BJ (cell line): ENCODE measurements at regions of chr1 and their contacts with region 1.

Region 1: DNA sequence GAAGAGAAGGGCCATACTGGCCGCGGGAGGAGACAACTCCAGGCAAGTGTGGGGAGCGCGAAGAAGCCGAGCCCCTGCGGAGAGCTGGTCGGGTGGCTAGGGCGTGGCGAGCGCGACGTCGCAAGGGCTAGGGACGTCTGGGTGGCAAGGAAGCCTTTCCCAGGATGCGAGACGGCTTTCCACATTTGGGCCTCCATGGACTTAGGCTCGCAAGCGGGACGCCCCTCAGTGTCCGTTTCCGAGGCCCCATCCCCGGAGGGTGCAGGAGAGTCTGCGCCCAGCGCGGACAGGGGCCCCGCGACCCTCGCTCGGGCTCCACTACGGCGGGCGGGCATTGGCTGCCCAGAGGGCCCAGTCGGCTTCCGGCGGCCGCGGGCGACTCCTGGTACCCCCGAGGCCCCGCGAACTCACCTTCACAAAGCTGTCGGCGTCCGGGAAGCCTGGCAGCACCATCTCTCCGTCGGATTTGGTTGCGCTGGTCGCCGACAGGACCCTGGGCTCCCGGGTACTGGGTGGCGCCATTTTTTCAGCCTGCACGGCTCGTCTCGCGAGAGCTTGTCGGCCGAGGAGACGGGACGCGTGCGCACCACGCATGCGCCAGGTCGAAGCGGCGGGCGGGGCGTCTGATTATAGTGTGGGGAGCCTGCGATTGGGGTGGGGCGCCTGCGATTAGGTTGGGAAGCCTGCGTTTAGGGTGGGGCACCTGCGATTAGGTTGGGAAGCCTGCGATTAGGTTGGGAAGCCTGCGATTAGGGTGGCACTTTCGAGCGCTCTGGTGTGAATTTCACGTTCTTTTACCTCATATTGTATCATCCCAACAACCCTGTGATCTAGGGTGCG is at the start of gene EXOSC10:
- DNase-seq: no peak
- H3K4me3 ChIP-seq: peak within 1 kb of the TSS; percentile 99
- H3K27me3 ChIP-seq: no peaks in the 10 kb centered on the region
- CTCF ChIP-seq: no peak
- polyA plus RNA-seq, gene EXOSC10: 72.1 and 74.6 TPM in 2 replicates

Region 2: GRCh38 chr1:11059990-11060830 is 39.3 kb before region 1 on chr1 and contains the start of gene SRM:
- CTCF ChIA-PET with region 1: no interaction called
- POLR2A ChIA-PET with region 1: interaction called, 11 read pairs
- DNase-seq: peak; percentile 55
- H3K4me3 ChIP-seq: peak within 1 kb of the TSS; percentile 96
- H3K27me3 ChIP-seq: no peaks in the 10 kb centered on the region
- CTCF ChIP-seq: no peak
- polyA plus RNA-seq, gene SRM: 47.5 and 75.2 TPM in 2 replicates